CD8-positive, alpha-beta T cell (primary cell): ENCODE measurements at regions of chr13 and their contacts with region 1.

Region 1: DNA sequence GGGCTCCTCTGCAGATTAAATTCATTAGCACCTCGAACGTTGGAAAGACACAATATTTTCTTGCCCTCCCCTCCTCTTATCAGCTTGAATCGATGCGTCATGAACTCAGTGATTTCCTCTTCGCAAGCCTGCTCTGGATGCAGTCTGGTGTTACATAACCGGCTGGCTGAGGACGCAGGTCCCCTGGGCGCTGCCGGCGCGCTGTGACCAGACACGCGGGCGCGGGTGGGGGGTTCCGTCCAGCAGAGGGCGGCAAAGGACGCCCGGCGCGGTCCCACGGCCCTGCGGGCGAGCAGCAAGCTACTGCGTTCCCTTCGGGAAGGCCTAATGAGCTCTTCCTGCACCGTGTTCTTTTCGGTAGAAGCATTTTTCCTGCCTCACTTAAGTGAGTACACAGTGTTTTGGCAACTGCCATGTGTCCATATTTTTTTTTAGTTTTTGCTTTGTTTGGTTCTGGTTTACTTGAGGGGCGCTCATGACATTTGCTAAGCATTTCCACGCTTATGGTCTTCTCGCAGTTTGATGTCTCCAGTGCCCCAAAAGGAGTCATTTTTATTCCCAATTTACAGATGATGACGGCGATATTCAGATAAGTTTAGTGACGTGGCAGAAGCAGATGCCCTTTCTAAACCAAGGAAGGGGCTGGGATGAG is 112.2 kb upstream of the MBNL2 start:
- DNase-seq: peak; percentile 63 to 90 (median 79)
- ATAC-seq: peak; percentile 90
- H3K4me3 ChIP-seq: no peak overlapping the region
- H3K4me3 Mint-ChIP-seq: peak overlapping the region; percentile 51
- H3K27ac ChIP-seq: no peak overlapping the region
- H3K27ac Mint-ChIP-seq: no peak overlapping the region
- H3K4me1 ChIP-seq: peaks cover 6% of the 10 kb centered on the region
- H3K4me1 Mint-ChIP-seq: peaks cover 11% of the 10 kb centered on the region
- H3K27me3 ChIP-seq: no peaks in the 10 kb centered on the region
- H3K27me3 Mint-ChIP-seq: peaks cover 3% of the 10 kb centered on the region
- CTCF ChIP-seq: peak; percentile 92

Region 2: GRCh38 chr13:96871469-96871868 is 238.5 kb before region 1 on chr13:
- CTCF ChIA-PET with region 1: no interaction called
- POLR2A ChIA-PET with region 1: no interaction called
- intact Hi-C with region 1: no loop called
- DNase-seq: no peak
- ATAC-seq: no peak
- H3K4me3 ChIP-seq: no peak overlapping the region
- H3K4me3 Mint-ChIP-seq: no peak overlapping the region
- H3K27ac ChIP-seq: no peak overlapping the region
- H3K27ac Mint-ChIP-seq: no peak overlapping the region
- H3K4me1 ChIP-seq: no peaks in the 10 kb centered on the region
- H3K4me1 Mint-ChIP-seq: no peaks in the 10 kb centered on the region
- H3K27me3 ChIP-seq: no peaks in the 10 kb centered on the region
- H3K27me3 Mint-ChIP-seq: no peaks in the 10 kb centered on the region
- CTCF ChIP-seq: no peak

Region 3: DNA sequence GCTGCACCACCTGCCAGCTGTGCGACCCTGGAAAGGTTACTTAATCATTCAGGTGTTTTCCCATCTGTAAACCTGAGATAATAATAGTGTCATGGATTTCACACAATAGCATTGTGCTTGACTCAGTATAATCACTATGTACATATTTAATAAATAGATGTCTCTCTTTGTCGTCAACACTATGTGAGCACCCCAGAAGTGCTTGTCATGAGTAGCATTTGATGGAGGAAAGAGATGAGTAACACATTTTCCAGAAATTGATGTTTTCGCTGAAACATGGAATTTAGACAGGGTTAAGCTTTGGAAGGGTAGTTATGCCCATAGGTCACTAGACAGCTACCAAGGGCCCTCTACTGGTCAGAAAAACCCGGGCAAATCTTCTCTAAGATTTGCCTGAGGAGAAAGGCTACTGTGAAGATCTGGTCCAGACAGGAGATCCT is 102.7 kb after region 1 on chr13:
- CTCF ChIA-PET with region 1: interaction called, 16 read pairs
- POLR2A ChIA-PET with region 1: no interaction called
- intact Hi-C with region 1: no loop called
- DNase-seq: no peak
- ATAC-seq: no peak
- H3K4me3 ChIP-seq: no peak overlapping the region
- H3K4me3 Mint-ChIP-seq: no peak overlapping the region
- H3K27ac ChIP-seq: no peak overlapping the region
- H3K27ac Mint-ChIP-seq: no peak overlapping the region
- H3K4me1 ChIP-seq: peaks cover 37% of the 10 kb centered on the region
- H3K4me1 Mint-ChIP-seq: peaks cover 52% of the 10 kb centered on the region
- H3K27me3 ChIP-seq: no peaks in the 10 kb centered on the region
- H3K27me3 Mint-ChIP-seq: no peaks in the 10 kb centered on the region
- CTCF ChIP-seq: no peak

Region 4: DNA sequence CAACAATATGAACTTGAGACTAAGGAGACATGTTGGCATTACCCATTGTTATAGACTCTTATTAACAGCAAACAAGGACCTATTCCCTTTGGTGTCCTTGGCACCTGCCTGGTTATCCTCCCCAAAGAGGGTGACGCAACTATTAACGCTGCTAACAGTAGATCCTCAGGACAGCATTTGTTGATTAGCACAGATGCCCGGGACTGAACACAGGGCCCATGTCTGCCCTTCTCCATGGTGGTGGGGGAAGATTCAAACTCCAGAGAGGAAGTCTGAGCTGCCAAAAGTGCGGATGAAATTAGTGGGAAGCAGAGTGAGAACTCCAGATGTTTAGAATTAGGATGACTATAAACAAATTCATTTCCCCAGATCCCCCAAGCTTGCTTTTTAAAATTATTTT is 222.8 kb after region 1 on chr13:
- CTCF ChIA-PET with region 1: interaction called, 10 read pairs
- POLR2A ChIA-PET with region 1: no interaction called
- intact Hi-C with region 1: no loop called
- DNase-seq: no peak
- ATAC-seq: no peak
- H3K4me3 ChIP-seq: no peak overlapping the region
- H3K4me3 Mint-ChIP-seq: no peak overlapping the region
- H3K27ac ChIP-seq: no peak overlapping the region
- H3K27ac Mint-ChIP-seq: no peak overlapping the region
- H3K4me1 ChIP-seq: no peaks in the 10 kb centered on the region
- H3K4me1 Mint-ChIP-seq: peaks cover 7% of the 10 kb centered on the region
- H3K27me3 ChIP-seq: no peaks in the 10 kb centered on the region
- H3K27me3 Mint-ChIP-seq: no peaks in the 10 kb centered on the region
- CTCF ChIP-seq: no peak

Region 5: DNA sequence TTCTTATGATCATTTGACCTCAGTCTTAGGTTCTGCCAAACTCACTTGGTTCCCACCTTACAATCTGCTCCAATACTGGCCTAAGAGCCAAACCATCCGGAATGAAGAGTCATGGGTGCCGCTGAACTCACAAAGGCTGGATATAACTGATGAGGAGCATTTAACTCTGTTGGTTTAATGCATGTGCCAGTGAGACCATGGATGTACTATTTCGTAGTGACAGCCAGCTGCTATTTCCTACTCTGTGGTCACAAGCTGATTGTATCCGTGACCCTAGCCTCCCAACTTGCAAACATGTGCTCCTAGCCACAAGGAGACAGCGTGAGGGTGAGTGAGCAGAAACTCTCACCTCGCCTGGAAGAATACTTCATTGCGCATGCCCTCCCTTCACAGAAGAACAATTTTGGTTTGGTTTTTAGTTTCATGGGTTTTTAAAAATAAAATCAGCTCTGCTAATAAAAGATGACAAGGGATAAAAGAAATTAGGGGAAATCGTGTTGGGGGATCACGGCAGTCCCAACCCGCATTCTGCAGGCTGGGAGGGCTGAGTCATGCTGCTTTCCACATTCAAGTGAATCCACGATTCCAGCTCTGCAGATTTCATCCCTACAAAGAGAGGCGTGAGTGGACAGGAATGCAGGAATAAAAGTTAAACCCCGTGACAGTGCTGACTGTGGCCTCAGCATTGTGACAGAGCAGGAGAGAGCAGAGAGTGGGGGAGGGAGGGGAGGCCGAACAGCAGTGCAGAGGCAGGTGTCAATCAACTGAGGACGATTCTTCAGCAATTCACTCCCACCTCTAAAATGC is 257.3 kb after region 1 on chr13:
- CTCF ChIA-PET with region 1: interaction called, 339 read pairs
- POLR2A ChIA-PET with region 1: interaction called, 3 read pairs
- intact Hi-C with region 1: no loop called
- DNase-seq: peak in 1 of 9 experiments; percentile 12
- ATAC-seq: no peak
- H3K4me3 ChIP-seq: no peak overlapping the region
- H3K4me3 Mint-ChIP-seq: no peak overlapping the region
- H3K27ac ChIP-seq: no peak overlapping the region
- H3K27ac Mint-ChIP-seq: no peak overlapping the region
- H3K4me1 ChIP-seq: peaks cover 5% of the 10 kb centered on the region
- H3K4me1 Mint-ChIP-seq: peaks cover 18% of the 10 kb centered on the region
- H3K27me3 ChIP-seq: no peaks in the 10 kb centered on the region
- H3K27me3 Mint-ChIP-seq: no peaks in the 10 kb centered on the region
- CTCF ChIP-seq: no peak

Region 6: DNA sequence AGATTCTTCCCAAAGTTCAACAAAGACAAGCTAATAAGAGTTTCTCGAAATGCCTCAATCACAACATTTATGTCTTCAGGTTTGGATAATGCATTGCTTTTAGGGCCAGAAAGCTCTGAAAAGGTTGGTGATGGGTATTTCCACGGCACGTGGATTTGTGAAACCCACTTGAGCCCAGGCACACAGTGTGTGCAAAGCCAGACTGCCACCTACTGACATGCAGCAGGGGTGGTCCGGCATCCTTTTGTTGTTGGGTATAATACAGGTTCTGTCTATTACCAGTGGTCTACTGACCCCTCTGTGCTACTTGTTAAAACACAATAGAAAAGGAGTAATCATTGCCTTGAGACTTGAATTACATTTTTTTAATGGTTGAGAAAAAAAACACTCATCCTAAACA is 549.6 kb after region 1 on chr13:
- CTCF ChIA-PET with region 1: interaction called, 3 read pairs
- POLR2A ChIA-PET with region 1: no interaction called
- intact Hi-C with region 1: loop called in 1 of 2 experiments (anchors 10 kb)
- DNase-seq: peak in 2 of 9 experiments; percentile 29 to 30
- ATAC-seq: no peak
- H3K4me3 ChIP-seq: no peak overlapping the region
- H3K4me3 Mint-ChIP-seq: no peak overlapping the region
- H3K27ac ChIP-seq: no peak overlapping the region
- H3K27ac Mint-ChIP-seq: no peak overlapping the region
- H3K4me1 ChIP-seq: no peaks in the 10 kb centered on the region
- H3K4me1 Mint-ChIP-seq: no peaks in the 10 kb centered on the region
- H3K27me3 ChIP-seq: no peaks in the 10 kb centered on the region
- H3K27me3 Mint-ChIP-seq: peaks cover 20% of the 10 kb centered on the region
- CTCF ChIP-seq: no peak